ENCODE measurements at regions of chr18 and their contacts with region 1.

Region 1: DNA sequence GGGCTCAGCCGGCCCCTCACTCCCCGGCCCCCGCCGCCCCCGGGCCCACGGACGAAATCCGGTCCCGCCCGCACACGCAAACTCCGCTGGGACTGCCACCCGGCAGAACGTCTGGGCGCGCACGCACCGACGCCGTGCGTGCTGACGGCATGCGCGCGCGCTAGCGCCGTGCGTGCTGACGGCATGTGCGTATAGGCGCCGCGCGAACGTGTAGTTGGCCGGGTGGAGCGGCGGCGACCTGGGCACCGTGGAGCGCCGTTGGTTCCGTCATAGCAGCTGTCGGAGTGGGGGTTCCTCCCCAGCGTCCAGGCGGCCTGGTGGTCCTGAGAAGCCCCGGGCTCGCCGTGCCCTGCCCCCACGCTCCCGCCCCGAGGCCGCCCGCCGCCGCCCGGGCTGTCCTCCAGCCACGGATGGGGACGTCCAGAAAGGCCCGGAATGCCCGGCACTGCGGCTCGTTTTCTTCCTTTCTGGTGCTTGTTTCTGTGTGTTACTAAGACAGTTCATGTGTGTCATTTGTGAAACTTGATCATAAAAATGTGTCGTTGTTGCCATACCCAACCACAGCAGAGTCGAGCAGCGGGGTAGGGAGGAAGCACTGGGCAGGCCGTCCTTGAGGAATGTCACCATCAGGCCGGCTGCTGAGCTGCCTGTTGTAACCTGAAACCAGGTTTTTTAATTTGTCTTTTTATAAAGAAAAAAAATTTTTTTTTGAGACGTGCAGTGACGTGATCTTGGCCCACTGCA is at the start of gene TXNL4A:
- DNase-seq: peak; percentile 89
- ATAC-seq: peak; percentile 94
- H3K4me3 Mint-ChIP-seq: peak within 1 kb of the TSS; percentile 87
- H3K27ac Mint-ChIP-seq: peak within 1 kb of the TSS; percentile 93
- H3K4me1 Mint-ChIP-seq: peaks cover 38% of the 10 kb centered on the region
- H3K27me3 Mint-ChIP-seq: no peaks in the 10 kb centered on the region
- total RNA-seq, gene TXNL4A: 140 to 151 TPM

Region 2: GRCh38 chr18:79042276-79042675 is 946.3 kb before region 1 on chr18:
- CTCF ChIA-PET with region 1: no interaction called
- DNase-seq: no peak
- ATAC-seq: no peak
- H3K4me3 Mint-ChIP-seq: no peak overlapping the region
- H3K27ac Mint-ChIP-seq: no peak overlapping the region
- H3K4me1 Mint-ChIP-seq: no peaks in the 10 kb centered on the region
- H3K27me3 Mint-ChIP-seq: peaks cover 4% of the 10 kb centered on the region

Region 3: DNA sequence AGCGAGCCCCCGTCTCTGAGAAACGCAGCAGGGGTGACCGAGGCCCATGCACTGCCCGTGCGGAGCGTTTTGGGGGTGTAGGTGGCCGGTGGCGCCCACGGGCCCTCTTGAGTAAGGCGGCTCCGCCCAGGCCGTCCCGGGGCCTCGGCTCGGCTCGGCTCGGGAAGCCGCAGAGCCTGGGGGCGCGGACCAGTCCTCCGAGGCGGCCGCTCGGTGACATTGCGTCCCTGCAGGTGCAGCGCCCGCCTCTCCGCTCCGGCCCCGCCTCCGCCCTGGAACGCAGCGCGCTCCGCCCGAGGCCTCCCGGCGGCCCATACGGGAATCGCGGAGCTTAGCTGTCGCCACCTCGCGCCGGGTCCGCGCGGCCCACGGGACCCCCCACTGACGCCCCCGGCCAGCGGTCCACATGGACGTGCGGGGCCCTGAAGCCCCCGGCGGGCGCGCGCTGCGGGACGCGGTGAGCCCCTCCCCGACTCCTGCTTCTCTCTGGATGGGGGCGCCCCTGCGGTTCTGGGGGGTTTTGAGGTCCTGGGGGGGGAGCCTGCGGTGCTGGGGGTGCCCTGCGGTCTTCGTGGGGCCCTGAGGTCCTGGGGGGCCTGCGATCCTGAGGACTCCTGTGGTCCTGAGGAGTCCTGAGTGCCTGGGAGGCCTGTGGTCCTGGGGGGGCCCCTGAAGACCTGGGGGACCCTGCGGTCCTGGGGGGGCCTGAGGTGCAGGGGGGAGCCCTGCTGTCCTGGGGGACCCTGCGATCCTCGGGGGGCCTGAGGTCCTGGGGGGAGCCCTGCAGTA is 24.1 kb before region 1 on chr18 and contains the start of gene HSBP1L1:
- CTCF ChIA-PET with region 1: interaction called, 47 read pairs
- DNase-seq: peak; percentile 70
- ATAC-seq: peak; percentile 77
- H3K4me3 Mint-ChIP-seq: peak within 1 kb of the TSS; percentile 68
- H3K27ac Mint-ChIP-seq: peak within 1 kb of the TSS; percentile 90
- H3K4me1 Mint-ChIP-seq: peaks cover 55% of the 10 kb centered on the region
- H3K27me3 Mint-ChIP-seq: peaks cover 23% of the 10 kb centered on the region
- total RNA-seq, gene HSBP1L1: 1.1 to 5.0 TPM

Measured in activated CD8-positive, alpha-beta memory T cell treated with anti-CD3 and anti-CD28 coated beads, Interleukin-2, amount 10 ng/mL, durations not matched to agents 7 days and 5 days (primary cell).